ENCODE measurements at regions of chr1 and their contacts with region 1.

Region 1: DNA sequence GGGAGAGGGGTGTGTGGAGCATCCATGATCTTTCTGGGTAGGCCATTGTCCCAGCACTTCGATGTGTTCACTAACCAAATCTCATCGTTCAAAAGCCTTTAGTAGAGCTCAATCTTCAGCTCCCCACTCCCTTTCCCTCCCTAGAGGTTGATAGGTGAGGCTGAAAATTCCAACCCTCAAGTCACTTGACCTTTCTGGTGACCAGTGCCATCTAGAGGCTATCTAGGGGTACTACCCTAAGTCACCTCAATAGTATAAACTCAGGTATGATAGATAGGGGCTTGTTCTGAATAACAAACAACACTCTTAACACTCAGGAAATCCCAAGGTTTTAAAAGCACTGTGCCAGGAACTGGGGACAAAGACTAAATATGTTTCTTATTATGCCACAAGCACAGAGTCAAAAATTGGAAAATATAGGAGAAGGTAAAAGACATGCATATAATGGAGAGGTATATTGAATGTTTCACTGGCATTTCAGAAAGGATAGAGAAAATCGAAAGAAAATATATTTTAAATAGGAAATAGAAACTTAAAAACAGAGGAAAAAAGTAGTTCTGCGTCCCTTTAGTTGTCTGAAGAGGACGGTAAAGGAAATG is 42.9 kb upstream of the CD53 start:
- DNase-seq: peak; percentile 15 to 46
- H3K4me3 ChIP-seq: no peak overlapping the region
- H3K27ac ChIP-seq: no peak overlapping the region
- H3K4me1 ChIP-seq: no peaks in the 10 kb centered on the region
- H3K27me3 ChIP-seq: no peaks in the 10 kb centered on the region
- CTCF ChIP-seq: peak in 2 of 3 experiments; percentile 76 to 82; a peak in 3 of 4 replicates
- EP300 ChIP-seq: no peak
- POLR2A ChIP-seq: no peak
- RAD21 ChIP-seq: peak; percentile 59 to 64

Region 2: DNA sequence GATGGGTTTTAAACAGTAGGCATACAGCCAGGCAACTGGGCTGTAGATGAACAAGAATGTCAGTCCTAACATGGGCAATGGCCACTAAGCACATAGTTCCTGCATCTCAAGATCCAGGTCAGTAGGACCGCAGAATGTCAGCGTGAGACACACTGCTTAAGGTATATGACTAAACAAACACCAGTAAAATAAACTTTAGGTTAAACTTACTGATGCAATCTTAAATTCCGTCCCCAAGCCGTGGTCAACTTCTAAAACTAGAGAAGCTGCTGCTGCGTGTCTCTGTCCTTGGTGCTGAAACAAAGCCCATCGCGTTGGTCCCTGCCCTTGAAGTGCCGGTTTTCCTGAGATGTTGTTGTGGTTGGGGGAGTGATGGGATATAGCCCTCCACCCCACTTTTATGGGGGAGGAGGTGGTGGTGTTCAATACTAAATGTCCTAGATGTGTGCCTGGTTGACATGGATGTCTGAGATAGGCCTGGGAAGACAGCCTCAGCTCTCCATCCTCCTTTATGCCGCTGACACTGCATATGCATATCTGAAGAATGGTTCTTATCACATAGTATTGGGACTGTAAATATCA is 83.4 kb before region 1 on chr1:
- CTCF ChIA-PET with region 1: no interaction called
- POLR2A ChIA-PET with region 1: no interaction called
- DNase-seq: peak; percentile 19 to 75
- H3K4me3 ChIP-seq: no peak overlapping the region
- H3K27ac ChIP-seq: no peak overlapping the region
- H3K4me1 ChIP-seq: peaks cover 0 to 17% (median 8%) of the 10 kb centered on the region in 4 experiments; a peak in 5 of 7 replicates
- H3K27me3 ChIP-seq: peaks cover 0 to 1% (median 0%) of the 10 kb centered on the region in 4 experiments; a peak in 2 of 7 replicates
- CTCF ChIP-seq: no peak
- EP300 ChIP-seq: no peak
- POLR2A ChIP-seq: no peak
- RAD21 ChIP-seq: no peak

Region 3: GRCh38 chr1:110816930-110817329 is 13.1 kb before region 1 on chr1:
- CTCF ChIA-PET with region 1: interaction called, 11 read pairs
- POLR2A ChIA-PET with region 1: no interaction called
- DNase-seq: no peak
- H3K4me3 ChIP-seq: no peak overlapping the region
- H3K27ac ChIP-seq: no peak overlapping the region
- H3K4me1 ChIP-seq: no peaks in the 10 kb centered on the region
- H3K27me3 ChIP-seq: 0 out of 7 replicates have a peak, but pooled peaks cover 0 to 2% (median 0%) of the 10 kb centered on the region in 4 experiments
- CTCF ChIP-seq: no peak
- EP300 ChIP-seq: no peak
- POLR2A ChIP-seq: no peak
- RAD21 ChIP-seq: no peak

Measured in H1 (cell line).